Activated naive CD8-positive, alpha-beta T cell treated with anti-CD3 and anti-CD28 coated beads, Interleukin-2, amount 10 ng/mL, durations not matched to agents 7 days and 5 days (primary cell): ENCODE measurements at regions of chrX and their contacts with region 1.

Region 1: GRCh38 chrX:38803586-38804431 is 2.5 kb downstream of the MID1IP1 start:
- DNase-seq: peak; percentile 83
- ATAC-seq: peak; percentile 65
- H3K4me3 Mint-ChIP-seq: peak overlapping the region; percentile 99
- H3K27ac Mint-ChIP-seq: peak overlapping the region; percentile 97
- H3K4me1 Mint-ChIP-seq: peaks cover 12% of the 10 kb centered on the region
- H3K27me3 Mint-ChIP-seq: no peaks in the 10 kb centered on the region

Region 2: GRCh38 chrX:38717871-38718270 is 85.9 kb before region 1 on chrX:
- POLR2A ChIA-PET with region 1: no interaction called
- DNase-seq: no peak
- ATAC-seq: no peak
- H3K4me3 Mint-ChIP-seq: no peak overlapping the region
- H3K27ac Mint-ChIP-seq: no peak overlapping the region
- H3K4me1 Mint-ChIP-seq: peaks cover 4% of the 10 kb centered on the region
- H3K27me3 Mint-ChIP-seq: no peaks in the 10 kb centered on the region

Region 3: DNA sequence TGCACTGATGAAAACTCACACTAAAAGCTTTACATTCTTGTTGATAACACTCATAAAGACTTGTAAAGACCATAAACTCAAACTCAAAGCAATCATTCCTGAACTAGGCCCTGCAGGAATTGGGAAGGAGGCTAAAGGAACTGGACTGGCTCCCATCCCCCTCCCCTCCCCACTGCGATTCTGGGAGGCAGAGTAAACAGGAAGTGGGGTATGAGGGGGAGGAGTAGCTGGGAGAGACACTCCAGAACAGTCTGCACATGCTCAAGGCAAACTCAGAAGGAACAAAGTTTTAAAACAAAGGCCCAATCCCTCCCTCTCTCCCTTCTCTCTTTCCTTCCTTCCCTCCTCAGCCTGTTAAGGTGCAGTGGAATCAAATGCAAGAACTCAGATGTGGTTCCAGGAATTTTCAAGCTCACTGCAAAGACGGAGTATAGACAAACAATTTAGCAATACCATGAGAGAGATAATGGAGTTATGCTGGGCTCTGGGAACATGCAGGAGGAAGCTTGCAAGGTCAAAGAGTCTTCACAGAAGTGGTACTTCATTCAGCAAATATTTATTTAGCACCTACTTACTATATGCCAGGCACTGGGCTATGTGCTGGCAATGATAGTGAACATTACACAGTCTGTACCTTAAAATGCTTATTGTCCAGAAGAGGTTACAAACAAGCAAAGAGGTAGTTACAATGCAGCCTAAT is 13.3 kb after region 1 on chrX:
- POLR2A ChIA-PET with region 1: interaction called, 82 read pairs
- DNase-seq: no peak
- ATAC-seq: peak; percentile 47
- H3K4me3 Mint-ChIP-seq: no peak overlapping the region
- H3K27ac Mint-ChIP-seq: no peak overlapping the region
- H3K4me1 Mint-ChIP-seq: peaks cover 6% of the 10 kb centered on the region
- H3K27me3 Mint-ChIP-seq: no peaks in the 10 kb centered on the region